ENCODE measurements at regions of chr11 and their contacts with region 1.

Region 1: DNA sequence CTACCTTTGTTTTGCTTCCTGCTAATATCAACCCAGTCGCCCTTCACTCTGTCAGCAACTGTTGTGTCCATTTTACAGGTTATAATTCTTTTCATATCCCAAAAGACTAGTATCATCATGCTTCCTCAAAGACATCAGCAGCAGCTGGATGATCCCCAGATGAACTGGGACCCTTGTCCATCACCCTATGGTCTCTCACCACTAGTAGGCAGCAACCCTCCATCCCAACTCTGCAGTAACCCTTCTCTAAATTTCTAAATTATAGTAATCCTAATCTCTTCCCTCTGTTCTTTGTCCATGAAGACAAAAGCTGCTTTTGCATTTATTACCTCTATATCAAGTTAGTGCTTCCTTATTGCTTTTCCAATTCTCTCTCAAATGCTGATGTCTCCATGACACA is 1025.8 kb downstream of the FAM181B start:
- DNase-seq: peak; percentile 22
- H3K4me3 ChIP-seq: no peak overlapping the region
- H3K27ac ChIP-seq: no peak overlapping the region
- H3K4me1 ChIP-seq: no peaks in the 10 kb centered on the region
- H3K27me3 ChIP-seq: no peaks in the 10 kb centered on the region
- CTCF ChIP-seq: peak; percentile 58

Region 2: DNA sequence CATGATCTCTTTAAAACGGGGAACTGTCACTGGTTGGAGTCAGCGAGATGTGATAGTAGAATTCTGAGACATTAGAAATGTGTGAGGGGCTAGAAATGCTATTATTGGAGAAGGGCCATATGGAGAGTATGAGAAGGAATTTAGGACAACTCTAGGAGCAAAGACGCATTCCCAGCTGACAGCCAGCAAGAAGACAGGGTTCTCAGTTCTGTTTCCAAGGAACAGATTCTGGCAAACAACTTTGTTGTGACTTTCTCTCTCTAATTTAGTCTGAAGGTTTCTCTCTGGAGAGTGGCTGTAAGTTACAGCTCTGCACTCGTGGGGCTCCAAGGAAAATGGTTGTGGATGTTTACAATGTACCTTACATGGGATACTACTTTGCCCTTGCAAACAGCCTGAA is 149.5 kb after region 1 on chr11:
- CTCF ChIA-PET with region 1: no interaction called
- POLR2A ChIA-PET with region 1: no interaction called
- intact Hi-C with region 1: no loop called
- DNase-seq: no peak
- H3K4me3 ChIP-seq: no peak overlapping the region
- H3K27ac ChIP-seq: no peak overlapping the region
- H3K4me1 ChIP-seq: no peaks in the 10 kb centered on the region
- H3K27me3 ChIP-seq: no peaks in the 10 kb centered on the region
- CTCF ChIP-seq: no peak

Region 3: DNA sequence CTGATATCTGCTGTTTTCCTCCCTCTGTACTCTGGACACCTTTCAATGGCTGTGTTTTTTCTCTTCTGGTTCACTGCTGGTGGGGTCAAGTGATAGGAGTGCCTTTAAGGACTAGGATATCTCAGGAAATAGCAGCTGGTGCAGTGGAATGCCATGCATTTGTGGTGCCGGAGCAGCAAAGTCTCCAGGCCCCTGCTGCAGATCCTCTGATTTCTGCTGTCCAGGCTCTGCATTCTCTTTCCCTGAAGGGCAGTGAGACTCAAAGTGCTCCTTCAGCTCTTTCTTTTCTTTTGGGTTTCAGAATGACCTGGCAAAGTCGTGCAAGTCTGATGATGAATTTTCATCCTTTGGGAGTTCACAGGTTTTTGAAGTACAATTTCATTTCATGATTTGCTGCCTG is 251.5 kb after region 1 on chr11:
- CTCF ChIA-PET with region 1: interaction called, 11 read pairs
- POLR2A ChIA-PET with region 1: no interaction called
- intact Hi-C with region 1: no loop called
- DNase-seq: no peak
- H3K4me3 ChIP-seq: no peak overlapping the region
- H3K27ac ChIP-seq: no peak overlapping the region
- H3K4me1 ChIP-seq: peaks cover 13% of the 10 kb centered on the region
- H3K27me3 ChIP-seq: no peaks in the 10 kb centered on the region
- CTCF ChIP-seq: no peak